Activated CD4-positive, alpha-beta memory T cell treated with anti-CD3 and anti-CD28 coated beads for 36 hours (primary cell): ENCODE measurements at regions of chr13 and their contacts with region 1.

Region 1: GRCh38 chr13:76016799-76017400 is 380.8 kb downstream of the LMO7 start:
- DNase-seq: peak; percentile 20
- H3K4me3 Mint-ChIP-seq: no peak overlapping the region
- H3K27ac Mint-ChIP-seq: no peak overlapping the region
- H3K4me1 Mint-ChIP-seq: no peaks in the 10 kb centered on the region
- H3K27me3 Mint-ChIP-seq: no peaks in the 10 kb centered on the region

Region 2: DNA sequence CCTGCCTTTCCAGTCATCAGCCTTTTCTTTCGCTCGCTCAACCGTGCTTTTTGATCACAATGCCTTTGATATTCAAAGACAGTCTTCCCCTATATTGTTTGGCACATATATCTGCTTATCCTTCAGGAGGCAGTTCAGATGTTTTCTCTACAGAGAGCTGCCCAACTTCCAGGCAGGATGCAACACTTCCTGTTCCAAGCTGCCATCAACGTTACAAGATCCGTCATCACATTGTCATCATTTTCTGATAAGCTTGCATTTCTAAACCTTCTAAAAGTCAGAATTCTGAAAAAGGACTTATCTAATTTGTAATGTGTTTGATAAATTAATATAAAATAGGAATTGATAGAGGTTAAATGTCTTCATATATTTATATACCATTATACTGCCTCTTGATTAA is 1109.1 kb before region 1 on chr13:
- CTCF ChIA-PET with region 1: no interaction called
- POLR2A ChIA-PET with region 1: no interaction called
- intact Hi-C with region 1: loop called (anchors 10 kb)
- DNase-seq: no peak
- H3K4me3 Mint-ChIP-seq: no peak overlapping the region
- H3K27ac Mint-ChIP-seq: no peak overlapping the region
- H3K4me1 Mint-ChIP-seq: no peaks in the 10 kb centered on the region
- H3K27me3 Mint-ChIP-seq: peaks cover 5% of the 10 kb centered on the region